ENCODE measurements at regions of chr10 and their contacts with region 1.

Region 1: GRCh38 chr10:52004342-52004949 is 305.1 kb upstream of the CSTF2T start:
- DNase-seq: peak; percentile 22
- H3K4me3 ChIP-seq: no peak overlapping the region
- H3K27ac ChIP-seq: no peak overlapping the region
- H3K4me1 ChIP-seq: no peaks in the 10 kb centered on the region
- CTCF ChIP-seq: peak; percentile 80

Region 2: DNA sequence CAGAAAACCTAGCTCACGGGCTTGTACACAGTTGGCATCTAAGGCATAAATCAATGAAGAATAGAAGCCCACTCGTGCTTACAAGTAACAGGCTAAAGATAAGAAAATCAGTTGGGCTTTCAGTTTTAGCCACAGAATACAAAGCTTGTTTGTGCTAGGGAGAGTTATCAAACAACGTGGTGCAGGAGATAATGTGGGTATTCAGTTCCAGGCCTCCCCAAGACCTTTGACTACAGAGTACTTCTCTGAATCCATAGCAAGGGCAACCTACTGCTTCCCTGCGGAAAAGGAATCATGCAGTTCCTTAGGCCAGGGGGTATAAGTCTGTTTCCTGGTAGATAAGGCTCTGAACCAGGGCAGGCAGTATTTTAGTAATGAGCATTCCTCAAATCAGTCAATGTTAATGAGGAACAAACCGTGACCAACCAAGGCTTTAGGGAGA is 85.5 kb before region 1 on chr10:
- CTCF ChIA-PET with region 1: no interaction called
- POLR2A ChIA-PET with region 1: no interaction called
- intact Hi-C with region 1: no loop called
- DNase-seq: no peak
- H3K4me3 ChIP-seq: no peak overlapping the region
- H3K27ac ChIP-seq: no peak overlapping the region
- H3K4me1 ChIP-seq: no peaks in the 10 kb centered on the region
- CTCF ChIP-seq: no peak

Region 3: DNA sequence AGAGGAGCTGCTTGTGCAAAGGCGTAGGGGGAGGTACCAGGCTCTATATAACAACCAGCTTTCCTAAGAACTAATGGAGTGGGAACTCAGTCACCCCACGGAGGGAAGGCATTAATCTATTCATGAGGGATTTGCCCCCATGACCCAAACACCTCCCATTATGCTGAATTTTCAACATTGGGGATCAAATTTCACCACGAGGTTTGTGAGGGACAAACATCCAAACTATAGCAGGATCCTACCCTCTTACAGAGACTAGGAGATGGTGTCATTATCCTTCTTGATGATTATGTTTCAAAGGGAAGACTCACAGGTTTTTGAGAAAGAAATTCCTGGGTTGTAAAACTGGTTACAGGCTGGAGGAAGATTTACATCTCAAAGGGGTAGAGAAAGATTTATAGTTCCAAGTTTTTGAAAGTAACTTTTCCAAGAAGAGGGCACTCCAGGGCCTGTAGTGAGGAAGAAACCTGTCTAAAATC is 14.7 kb after region 1 on chr10:
- CTCF ChIA-PET with region 1: no interaction called
- POLR2A ChIA-PET with region 1: no interaction called
- intact Hi-C with region 1: no loop called
- DNase-seq: no peak
- H3K4me3 ChIP-seq: no peak overlapping the region
- H3K27ac ChIP-seq: no peak overlapping the region
- H3K4me1 ChIP-seq: no peaks in the 10 kb centered on the region
- CTCF ChIP-seq: no peak

Region 4: GRCh38 chr10:52050429-52051047 is 46.1 kb after region 1 on chr10:
- CTCF ChIA-PET with region 1: no interaction called
- POLR2A ChIA-PET with region 1: no interaction called
- intact Hi-C with region 1: loop called (anchors 5 kb)
- DNase-seq: no peak
- H3K4me3 ChIP-seq: no peak overlapping the region
- H3K27ac ChIP-seq: no peak overlapping the region
- H3K4me1 ChIP-seq: no peaks in the 10 kb centered on the region
- CTCF ChIP-seq: no peak

Measured in OCI-LY7 (cell line).